Caco-2 (cell line): ENCODE measurements at regions of chr14 and their contacts with region 1.

Region 1: DNA sequence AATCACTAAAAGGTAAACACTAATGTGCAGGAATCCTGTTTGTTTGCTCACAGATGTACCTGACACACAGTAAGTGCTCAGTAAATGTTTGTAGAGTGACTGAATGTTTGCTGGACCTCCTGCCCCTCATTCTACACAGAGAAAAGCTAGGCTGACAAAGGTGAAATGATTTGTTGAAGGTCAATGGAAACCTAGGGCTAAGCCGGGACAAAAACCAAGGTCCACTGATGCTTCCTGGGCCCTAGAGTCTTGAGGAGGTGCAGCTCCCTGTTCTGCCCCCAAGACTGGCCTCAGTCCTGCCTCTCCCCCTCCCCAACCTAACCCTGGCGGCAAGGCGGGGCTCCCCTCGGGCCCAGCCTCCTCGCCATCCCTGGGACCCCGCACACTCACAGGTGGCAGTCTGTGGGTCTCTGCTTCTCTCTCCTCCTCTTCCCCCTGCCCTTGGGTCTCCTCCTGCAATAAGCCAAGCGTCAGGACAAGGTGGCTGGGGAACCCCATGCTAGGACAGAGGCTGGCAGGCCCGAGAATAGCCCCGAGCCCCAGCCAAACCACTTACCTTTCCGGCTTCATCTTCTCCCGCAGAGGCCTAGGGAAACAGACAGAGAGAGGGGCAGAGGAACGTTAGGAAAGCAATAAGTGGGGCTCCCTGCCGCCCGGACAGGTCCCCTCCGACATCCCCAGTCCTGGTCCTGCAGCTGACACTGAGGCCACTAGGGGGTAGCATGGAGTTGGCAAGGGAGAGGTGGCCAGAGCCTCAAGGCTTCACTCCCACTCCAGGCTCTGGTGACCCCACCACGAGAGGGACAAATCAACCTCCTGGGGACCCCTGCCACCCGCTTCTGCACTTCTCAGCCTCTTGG is 9.3 kb downstream of the PGF start:
- DNase-seq: peak; percentile 77 to 86
- H3K4me3 ChIP-seq: no peak overlapping the region
- H3K4me3 Mint-ChIP-seq: no peak overlapping the region
- H3K27ac Mint-ChIP-seq: peak overlapping the region; percentile 7
- H3K4me1 ChIP-seq: peaks cover 29% of the 10 kb centered on the region
- H3K4me1 Mint-ChIP-seq: peaks cover 9% of the 10 kb centered on the region
- H3K27me3 ChIP-seq: no peaks in the 10 kb centered on the region
- H3K27me3 Mint-ChIP-seq: no peaks in the 10 kb centered on the region
- CTCF ChIP-seq: peak; percentile 81 to 93

Region 2: DNA sequence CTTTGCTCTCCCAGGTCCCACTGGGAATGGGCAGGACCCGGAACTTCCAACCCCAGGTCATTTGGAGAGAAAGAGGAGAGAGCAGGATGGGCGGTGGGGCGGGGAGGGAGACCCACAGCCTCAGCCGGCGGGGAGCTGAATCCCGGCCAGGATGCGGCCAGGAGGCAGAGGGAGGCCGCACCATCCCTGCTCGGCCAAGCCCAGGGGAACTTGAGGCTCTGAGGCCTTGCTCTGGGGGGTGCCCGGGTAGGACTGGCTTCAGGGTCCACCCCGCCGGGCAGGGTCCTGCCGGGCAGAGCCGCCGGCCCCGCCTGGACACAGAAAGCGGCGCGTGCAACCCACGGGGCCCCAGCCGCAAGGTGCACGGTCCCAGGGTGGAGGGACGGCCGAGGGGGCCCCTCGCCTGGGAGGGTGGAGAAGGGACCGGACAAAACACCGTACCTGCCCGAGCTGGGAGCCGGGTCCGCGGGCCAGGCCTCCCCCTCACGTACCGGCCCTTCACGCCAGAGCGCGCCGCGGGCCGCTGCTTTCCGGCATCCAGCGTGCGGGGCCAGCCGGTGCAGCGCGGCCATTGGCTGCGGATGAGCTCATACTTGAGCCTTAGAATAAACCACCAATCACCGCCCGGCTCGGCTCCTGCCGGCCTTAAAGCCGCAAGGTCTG is 23.2 kb before region 1 on chr14 and contains the start of gene RPS6KL1:
- CTCF ChIA-PET with region 1: interaction called, 16 read pairs
- POLR2A ChIA-PET with region 1: no interaction called
- intact Hi-C with region 1: no loop called
- DNase-seq: peak; percentile 80 to 87
- H3K4me3 ChIP-seq: peak within 1 kb of the TSS; percentile 75
- H3K4me3 Mint-ChIP-seq: peak within 1 kb of the TSS; percentile 84
- H3K27ac Mint-ChIP-seq: no peak within 1 kb of the TSS
- H3K4me1 ChIP-seq: no peaks in the 10 kb centered on the region
- H3K4me1 Mint-ChIP-seq: peaks cover 6% of the 10 kb centered on the region
- H3K27me3 ChIP-seq: no peaks in the 10 kb centered on the region; the same call in 1 of the 2 replicates
- H3K27me3 Mint-ChIP-seq: peaks cover 5% of the 10 kb centered on the region
- CTCF ChIP-seq: no peak
- total RNA-seq, gene RPS6KL1: 6.8 and 9.8 TPM in 2 replicates

Region 3: DNA sequence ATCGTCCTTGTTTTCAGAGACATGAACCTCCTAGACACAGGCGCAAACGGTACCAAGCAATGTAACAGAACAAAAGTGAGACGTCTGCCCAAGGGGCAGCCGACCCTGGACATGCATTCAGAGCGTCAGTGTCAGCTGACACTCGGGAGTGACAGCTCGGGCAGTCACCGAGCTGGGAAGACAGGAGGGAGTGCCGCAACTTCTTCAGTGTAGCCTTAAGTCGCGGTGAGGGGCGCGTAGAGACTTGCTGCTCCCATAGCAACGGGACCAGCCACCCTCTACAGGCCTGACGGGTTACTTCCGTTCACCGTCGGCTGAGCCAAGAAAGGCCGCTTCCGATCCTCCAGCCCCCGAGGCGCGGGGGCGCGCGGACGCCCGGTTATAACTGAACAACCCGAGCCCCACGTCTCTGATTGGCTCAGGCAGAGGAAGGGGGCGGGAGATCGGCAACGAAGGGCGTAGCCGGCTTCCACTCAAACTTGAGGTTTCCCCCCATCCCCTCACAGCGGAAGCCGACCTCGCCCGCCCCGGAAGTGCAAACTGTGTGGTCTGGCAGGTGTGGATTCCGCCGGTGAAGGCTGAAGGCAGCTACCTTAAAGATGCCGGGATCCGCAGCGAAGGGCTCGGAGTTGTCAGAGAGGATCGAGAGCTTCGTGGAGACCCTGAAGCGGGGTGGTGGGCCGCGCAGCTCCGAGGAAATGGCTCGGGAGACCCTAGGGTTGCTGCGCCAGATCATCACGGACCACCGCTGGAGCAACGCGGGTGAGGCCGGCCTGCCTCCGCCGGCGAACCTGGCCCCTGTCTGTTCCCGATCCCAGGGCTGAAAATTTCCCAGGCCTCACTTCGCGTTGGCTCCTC is 56.6 kb after region 1 on chr14 and contains the start of gene EIF2B2:
- CTCF ChIA-PET with region 1: interaction called, 3 read pairs
- POLR2A ChIA-PET with region 1: no interaction called
- intact Hi-C with region 1: loop called (anchors 1 kb)
- DNase-seq: peak; percentile 98
- H3K4me3 ChIP-seq: peak within 1 kb of the TSS; percentile 82
- H3K4me3 Mint-ChIP-seq: peak within 1 kb of the TSS; percentile 87
- H3K27ac Mint-ChIP-seq: peak within 1 kb of the TSS; percentile 86
- H3K4me1 ChIP-seq: peaks cover 6% of the 10 kb centered on the region; the same call in 1 of the 2 replicates
- H3K4me1 Mint-ChIP-seq: peaks cover 7% of the 10 kb centered on the region
- H3K27me3 ChIP-seq: no peaks in the 10 kb centered on the region
- H3K27me3 Mint-ChIP-seq: no peaks in the 10 kb centered on the region
- CTCF ChIP-seq: peak in 1 of 2 experiments; percentile 29
- total RNA-seq, gene EIF2B2: 48.8 and 54.4 TPM in 2 replicates

Region 4: GRCh38 chr14:75022655-75023054 is 76.6 kb after region 1 on chr14:
- CTCF ChIA-PET with region 1: interaction called, 6 read pairs
- POLR2A ChIA-PET with region 1: no interaction called
- intact Hi-C with region 1: loop called (anchors 1 kb)
- DNase-seq: peak; percentile 47 to 50
- H3K4me3 ChIP-seq: no peak overlapping the region
- H3K4me3 Mint-ChIP-seq: no peak overlapping the region
- H3K27ac Mint-ChIP-seq: no peak overlapping the region
- H3K4me1 ChIP-seq: peaks cover 14% of the 10 kb centered on the region
- H3K4me1 Mint-ChIP-seq: peaks cover 18% of the 10 kb centered on the region
- H3K27me3 ChIP-seq: no peaks in the 10 kb centered on the region
- H3K27me3 Mint-ChIP-seq: no peaks in the 10 kb centered on the region
- CTCF ChIP-seq: peak; percentile 51 to 62